Right ventricle myocardium superior (tissue), 1 donor: ENCODE measurements at regions of chr6 and their contacts with region 1.

Region 1: GRCh38 chr6:129575378-129576118 is 134.4 kb downstream of the ARHGAP18 start:
- DNase-seq: no peak
- ATAC-seq: peak; percentile 87

Region 2: GRCh38 chr6:129498950-129499842 is 76.4 kb before region 1 on chr6:
- intact Hi-C with region 1: loop called (anchors 5 kb)
- DNase-seq: no peak
- ATAC-seq: peak; percentile 54

Region 3: GRCh38 chr6:129908858-129909257 is 333.3 kb after region 1 on chr6:
- intact Hi-C with region 1: no loop called
- DNase-seq: no peak
- ATAC-seq: no peak